ENCODE measurements at regions of chr14 and their contacts with region 1.

Region 1: GRCh38 chr14:69101331-69101826 is 51.5 kb downstream of the DCAF5 start:
- DNase-seq: peak; percentile 80
- H3K4me3 ChIP-seq: no peak overlapping the region
- H3K27ac ChIP-seq: peak overlapping the region; percentile 16
- H3K4me1 ChIP-seq: peaks cover 19% of the 10 kb centered on the region
- H3K27me3 ChIP-seq: no peaks in the 10 kb centered on the region
- CTCF ChIP-seq: peak; percentile 61 to 70
- POLR2A ChIP-seq: no peak

Region 2: DNA sequence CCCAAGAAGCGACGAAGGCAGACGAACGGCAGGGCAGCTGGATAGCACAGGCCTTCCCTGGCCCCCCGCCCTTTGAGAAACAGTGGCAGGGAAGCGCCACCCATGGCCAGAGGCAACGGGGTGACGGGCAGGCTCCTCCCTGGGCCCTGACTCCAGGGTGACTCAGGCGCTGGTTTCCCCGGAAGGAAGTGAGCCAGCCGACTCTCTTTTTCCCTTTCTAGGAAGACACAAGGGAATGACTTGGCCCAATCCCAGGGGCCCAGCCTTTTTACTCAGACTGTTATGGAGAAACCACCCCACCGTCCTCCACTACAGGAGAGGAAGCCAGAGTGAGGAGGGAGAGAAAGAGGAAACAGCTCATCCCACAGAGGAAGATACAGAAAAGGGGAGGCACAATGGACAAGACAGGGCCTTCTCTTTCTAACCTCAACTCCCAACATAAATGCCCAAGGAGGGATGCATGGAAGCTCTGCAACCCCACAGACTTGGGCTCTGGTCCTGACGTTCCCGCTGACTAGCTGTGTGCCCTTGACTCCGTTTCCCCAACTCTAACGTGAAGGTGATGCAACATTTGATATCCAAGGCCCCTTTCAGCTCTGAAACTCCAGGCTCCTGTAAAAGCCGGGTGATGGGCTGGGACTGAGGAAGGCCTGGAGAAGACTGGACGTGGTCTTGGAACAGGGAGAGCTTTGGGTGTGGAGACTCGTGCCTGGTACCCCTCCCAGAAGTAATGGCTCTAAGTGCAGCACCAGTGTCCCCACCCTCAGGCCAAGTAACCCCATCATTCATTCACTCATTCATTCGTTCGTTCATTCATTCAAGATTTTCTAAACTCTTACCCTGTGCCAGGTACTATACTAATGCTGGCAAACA is 150.1 kb before region 1 on chr14:
- CTCF ChIA-PET with region 1: interaction called, 18 read pairs
- POLR2A ChIA-PET with region 1: no interaction called
- dilution Hi-C with region 1: no loop called
- intact Hi-C with region 1: no loop called
- DNase-seq: peak; percentile 74
- H3K4me3 ChIP-seq: no peak overlapping the region
- H3K27ac ChIP-seq: peak overlapping the region; percentile 77
- H3K4me1 ChIP-seq: peaks cover 78% of the 10 kb centered on the region
- H3K27me3 ChIP-seq: no peaks in the 10 kb centered on the region
- CTCF ChIP-seq: no peak
- POLR2A ChIP-seq: no peak

Measured in endothelial cell of umbilical vein (primary cell).